Activated naive CD8-positive, alpha-beta T cell treated with anti-CD3 and anti-CD28 coated beads, Interleukin-2, amount 10 ng/mL, durations not matched to agents 7 days and 5 days (primary cell): ENCODE measurements at regions of chr9 and their contacts with region 1.

Region 1: GRCh38 chr9:129802851-129803675 is at the start of gene TOR1B:
- DNase-seq: peak; percentile 98
- ATAC-seq: peak; percentile 91
- H3K4me3 Mint-ChIP-seq: peak within 1 kb of the TSS; percentile 94
- H3K27ac Mint-ChIP-seq: peak within 1 kb of the TSS; percentile 94
- H3K4me1 Mint-ChIP-seq: peaks cover 21% of the 10 kb centered on the region
- H3K27me3 Mint-ChIP-seq: no peaks in the 10 kb centered on the region
- total RNA-seq, gene TOR1B: 28.6 TPM

Region 2: GRCh38 chr9:129868916-129869486 is 65.9 kb after region 1 on chr9:
- POLR2A ChIA-PET with region 1: interaction called, 16 read pairs
- DNase-seq: peak; percentile 88
- ATAC-seq: peak; percentile 88
- H3K4me3 Mint-ChIP-seq: peak overlapping the region; percentile 60
- H3K27ac Mint-ChIP-seq: peak overlapping the region; percentile 90
- H3K4me1 Mint-ChIP-seq: peaks cover 55% of the 10 kb centered on the region
- H3K27me3 Mint-ChIP-seq: no peaks in the 10 kb centered on the region

Region 3: GRCh38 chr9:129900263-129901027 is 97.4 kb after region 1 on chr9:
- POLR2A ChIA-PET with region 1: no interaction called
- DNase-seq: no peak
- ATAC-seq: no peak
- H3K4me3 Mint-ChIP-seq: no peak overlapping the region
- H3K27ac Mint-ChIP-seq: no peak overlapping the region
- H3K4me1 Mint-ChIP-seq: peaks cover 39% of the 10 kb centered on the region
- H3K27me3 Mint-ChIP-seq: no peaks in the 10 kb centered on the region